ENCODE measurements at regions of chr1 and their contacts with region 1.

Region 1: DNA sequence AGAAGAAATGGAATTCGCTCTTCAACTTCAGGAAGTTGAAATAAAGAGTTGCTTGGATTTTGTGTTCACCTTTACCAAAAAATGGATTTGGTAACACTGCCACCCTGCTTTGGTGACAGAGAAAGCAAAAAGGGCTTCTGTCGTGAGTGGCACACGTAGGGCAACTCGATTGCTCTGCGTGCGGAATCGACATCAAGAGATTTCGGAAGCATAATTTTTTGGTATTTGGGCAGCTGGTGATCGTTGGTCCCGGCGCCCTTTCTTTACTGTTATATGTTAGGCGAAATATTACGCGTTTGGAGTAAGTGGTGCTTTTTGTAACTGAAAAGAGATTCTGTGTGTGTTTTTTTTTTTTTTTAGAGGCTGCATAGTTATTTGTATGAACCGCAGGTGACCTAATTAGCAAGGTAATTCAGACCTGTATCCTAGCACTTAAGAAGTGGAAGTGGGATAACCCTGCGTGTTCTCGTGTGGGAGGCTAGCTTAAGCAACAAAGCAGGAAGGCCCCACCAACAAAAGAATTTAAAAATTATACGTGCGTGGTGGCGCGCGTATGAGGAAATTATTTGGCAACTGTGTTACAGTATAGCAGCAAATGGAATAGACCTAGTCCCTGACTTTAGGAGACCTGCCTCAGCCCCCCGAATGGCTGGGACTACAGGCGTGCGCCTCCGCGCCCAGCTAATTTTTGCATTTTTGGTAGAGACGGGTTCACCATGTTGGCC is at the start of gene RNU11:
- DNase-seq: peak; percentile 75 to 90
- H3K4me3 ChIP-seq: peak within 1 kb of the TSS; percentile 41 to 57 (median 45)
- H3K27ac ChIP-seq: peak within 1 kb of the TSS; percentile 99
- H3K4me1 ChIP-seq: peaks cover 0 to 4% (median 0%) of the 10 kb centered on the region in 4 experiments; a peak in 4 of 7 replicates
- H3K27me3 ChIP-seq: no peaks in the 10 kb centered on the region
- CTCF ChIP-seq: no peak
- EP300 ChIP-seq: peak in 1 of 2 experiments; percentile 73; a peak in 2 of 3 replicates
- POLR2A ChIP-seq: peak; percentile 100
- RAD21 ChIP-seq: 0 out of 4 replicates have a peak, but pooled peaks of 1 of the 2 experiments have one; percentile 8
- total RNA-seq, gene RNU11: not detected in 2 replicates

Region 2: GRCh38 chr1:28564310-28564709 is 84.3 kb before region 1 on chr1:
- CTCF ChIA-PET with region 1: no interaction called
- POLR2A ChIA-PET with region 1: no interaction called
- DNase-seq: no peak
- H3K4me3 ChIP-seq: no peak overlapping the region
- H3K27ac ChIP-seq: no peak overlapping the region
- H3K4me1 ChIP-seq: no peaks in the 10 kb centered on the region
- H3K27me3 ChIP-seq: no peaks in the 10 kb centered on the region
- CTCF ChIP-seq: no peak
- EP300 ChIP-seq: no peak
- POLR2A ChIP-seq: no peak
- RAD21 ChIP-seq: no peak

Region 3: GRCh38 chr1:28744184-28744583 is 95.5 kb after region 1 on chr1:
- CTCF ChIA-PET with region 1: interaction called, 4 read pairs
- POLR2A ChIA-PET with region 1: interaction called, 11 read pairs
- DNase-seq: no peak
- H3K4me3 ChIP-seq: peak overlapping the region in 1 of 4 experiments; percentile 34; a peak in 4 of 8 replicates
- H3K27ac ChIP-seq: no peak overlapping the region
- H3K4me1 ChIP-seq: peaks cover 0 to 5% (median 3%) of the 10 kb centered on the region in 4 experiments; a peak in 3 of 7 replicates
- H3K27me3 ChIP-seq: no peaks in the 10 kb centered on the region
- CTCF ChIP-seq: no peak
- EP300 ChIP-seq: no peak
- POLR2A ChIP-seq: no peak; a peak in 2 of 3 replicates
- RAD21 ChIP-seq: no peak

Measured in H1 (cell line).